GM10248 (cell line): ENCODE measurements at regions of chr5 and their contacts with region 1.

Region 1: DNA sequence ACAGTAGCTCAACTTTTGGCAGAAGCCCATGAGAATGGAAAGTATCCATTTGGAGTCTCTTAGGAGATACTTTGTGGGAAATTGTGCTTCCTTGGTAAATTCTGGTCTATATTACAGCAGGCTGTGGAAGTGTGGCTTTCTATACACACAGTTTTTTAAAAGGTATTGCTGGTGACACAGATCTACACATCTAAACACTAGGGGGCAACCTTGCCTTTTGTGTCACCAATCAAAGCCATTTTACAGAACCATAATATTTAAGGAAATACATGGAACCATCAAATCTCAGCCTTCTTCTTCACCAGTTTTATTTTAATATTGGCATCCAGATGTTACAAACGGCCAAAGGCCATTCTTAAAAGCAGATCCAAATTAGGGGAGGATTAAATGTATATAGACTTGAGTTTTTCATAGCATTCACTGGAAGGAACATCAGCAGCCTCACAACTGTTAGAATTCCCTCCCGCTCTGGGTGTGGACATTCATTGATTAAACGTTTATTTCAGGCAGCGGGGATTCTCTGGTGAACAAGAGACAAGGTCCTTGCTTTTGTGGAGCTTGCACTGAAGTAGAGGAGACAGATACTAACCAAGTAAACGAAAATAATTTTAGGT is 132.4 kb upstream of the EPB41L4A start:
- DNase-seq: peak; percentile 58
- CTCF ChIP-seq: peak; percentile 56

Region 2: GRCh38 chr5:112529525-112529924 is 22.0 kb before region 1 on chr5:
- CTCF ChIA-PET with region 1: interaction called, 13 read pairs
- POLR2A ChIA-PET with region 1: no interaction called
- DNase-seq: no peak
- CTCF ChIP-seq: peak; percentile 37

Region 3: DNA sequence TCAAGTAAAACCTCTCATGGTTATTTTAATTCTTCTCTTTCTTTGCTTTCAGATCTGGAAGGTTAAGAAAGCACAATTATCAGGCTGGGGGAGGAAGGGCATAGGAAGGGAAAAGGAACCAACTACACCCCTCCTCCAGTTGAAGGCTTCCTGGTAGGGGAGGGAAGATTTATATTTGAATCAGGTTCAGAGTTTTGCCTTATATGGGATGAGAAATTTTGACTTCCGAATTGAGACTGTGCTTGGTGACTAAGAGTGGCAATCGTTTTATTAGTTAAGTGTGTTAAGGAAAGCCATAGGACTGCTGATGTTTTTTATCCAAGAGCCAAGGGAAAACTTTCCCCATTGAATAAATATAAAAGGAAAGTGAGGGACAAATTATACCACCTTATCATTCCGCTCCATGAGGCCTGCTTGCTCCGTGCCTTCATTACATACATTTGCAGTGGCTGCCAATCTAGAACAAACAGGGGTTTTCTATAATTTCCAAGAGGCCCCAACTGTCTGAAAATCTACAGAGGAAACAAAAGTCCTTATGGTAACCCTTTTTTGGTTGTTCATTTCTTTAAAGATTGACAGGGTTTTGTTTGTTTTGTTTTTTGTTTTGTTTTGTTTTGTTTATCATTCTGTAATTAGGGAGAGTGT is 16.8 kb before region 1 on chr5:
- CTCF ChIA-PET with region 1: interaction called, 13 read pairs
- POLR2A ChIA-PET with region 1: no interaction called
- DNase-seq: no peak
- CTCF ChIP-seq: no peak

Region 4: GRCh38 chr5:112576298-112576925 is 24.9 kb after region 1 on chr5:
- CTCF ChIA-PET with region 1: interaction called, 11 read pairs
- POLR2A ChIA-PET with region 1: no interaction called
- DNase-seq: no peak
- CTCF ChIP-seq: no peak